ENCODE measurements at regions of chr7 and their contacts with region 1.

Region 1: DNA sequence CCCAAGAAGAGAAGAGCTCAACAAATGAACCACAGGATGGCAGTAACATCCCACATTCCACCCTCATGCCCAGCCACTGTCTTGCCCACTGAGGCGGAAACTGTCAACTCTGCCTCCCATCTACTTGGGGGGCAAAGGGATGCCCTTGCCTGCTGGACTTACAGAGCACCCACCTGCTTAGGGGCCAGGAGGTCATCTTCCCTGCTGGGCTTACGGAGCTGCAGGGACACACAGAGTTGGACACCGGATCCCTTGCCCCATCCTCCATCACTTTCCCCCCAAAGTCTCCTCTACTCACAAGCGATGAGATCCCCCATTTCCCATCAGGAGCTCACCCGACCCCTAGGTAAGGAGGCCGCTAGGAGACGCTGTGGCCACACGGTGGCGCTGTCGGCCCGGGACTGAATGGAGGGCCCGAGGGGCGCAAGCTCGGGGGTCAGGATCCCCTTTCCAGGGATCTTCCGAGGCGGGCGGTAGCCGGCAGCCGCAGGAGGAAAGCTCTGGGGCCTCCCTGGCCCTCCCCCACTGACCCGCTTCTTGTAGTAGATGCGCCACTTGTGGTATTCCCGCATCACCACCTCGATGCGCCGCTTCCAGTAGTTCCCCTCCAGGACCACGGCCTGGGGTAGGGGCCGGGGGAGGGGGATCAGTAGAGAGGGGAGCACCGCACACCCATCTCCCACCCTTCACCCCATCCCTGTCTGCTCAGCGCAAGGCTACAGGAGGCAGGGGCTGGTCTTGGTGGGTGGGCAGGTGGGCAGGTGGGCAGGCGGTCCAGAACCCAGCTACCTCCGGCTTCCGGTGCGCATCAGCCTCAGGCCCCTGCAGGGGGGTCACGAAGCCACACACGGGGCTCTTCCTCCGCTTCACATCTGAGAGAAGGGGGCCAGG is 17.3 kb downstream of the MLXIPL start:
- DNase-seq: no peak
- H3K4me3 ChIP-seq: no peak overlapping the region
- H3K27ac ChIP-seq: no peak overlapping the region
- H3K4me1 ChIP-seq: peaks cover 9% of the 10 kb centered on the region
- H3K27me3 ChIP-seq: no peaks in the 10 kb centered on the region
- CTCF ChIP-seq: peak; percentile 85 to 98

Region 2: DNA sequence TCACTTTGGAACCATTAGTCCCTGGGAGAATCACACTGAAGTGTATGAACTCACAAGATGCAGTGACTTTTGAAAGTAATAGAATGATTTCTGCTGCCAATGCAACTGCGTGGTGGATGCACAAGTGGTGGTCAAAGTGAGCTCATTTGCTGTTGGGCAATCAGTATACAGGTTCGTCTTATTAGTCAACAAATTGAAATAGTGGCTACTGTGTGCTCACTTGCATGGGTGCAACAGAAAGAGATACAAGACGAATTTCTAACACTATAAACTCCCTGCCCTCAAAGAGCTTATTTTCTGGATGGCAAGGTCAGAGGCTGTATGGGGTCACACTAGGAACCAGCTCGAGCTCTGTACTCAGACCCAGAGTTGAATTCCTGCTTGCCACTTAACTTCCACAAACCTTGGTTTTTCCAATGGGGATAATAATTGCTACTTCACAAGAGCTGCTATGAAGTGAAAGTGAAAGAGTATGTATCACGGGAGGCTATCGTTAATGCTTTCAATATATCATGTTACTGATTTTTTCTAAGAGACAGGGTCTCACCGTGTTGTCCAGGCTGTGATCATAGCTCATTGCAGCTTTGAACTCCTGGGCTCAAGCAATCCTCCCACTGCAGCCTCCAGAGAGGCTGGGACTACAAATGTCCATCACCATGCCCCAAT is 41.2 kb before region 1 on chr7:
- CTCF ChIA-PET with region 1: no interaction called
- dilution Hi-C with region 1: loop called (anchors 5 kb)
- in situ Hi-C with region 1: no loop called
- intact Hi-C with region 1: no loop called
- DNase-seq: no peak
- H3K4me3 ChIP-seq: no peak overlapping the region
- H3K27ac ChIP-seq: no peak overlapping the region
- H3K4me1 ChIP-seq: no peaks in the 10 kb centered on the region
- H3K27me3 ChIP-seq: no peaks in the 10 kb centered on the region
- CTCF ChIP-seq: no peak

Region 3: DNA sequence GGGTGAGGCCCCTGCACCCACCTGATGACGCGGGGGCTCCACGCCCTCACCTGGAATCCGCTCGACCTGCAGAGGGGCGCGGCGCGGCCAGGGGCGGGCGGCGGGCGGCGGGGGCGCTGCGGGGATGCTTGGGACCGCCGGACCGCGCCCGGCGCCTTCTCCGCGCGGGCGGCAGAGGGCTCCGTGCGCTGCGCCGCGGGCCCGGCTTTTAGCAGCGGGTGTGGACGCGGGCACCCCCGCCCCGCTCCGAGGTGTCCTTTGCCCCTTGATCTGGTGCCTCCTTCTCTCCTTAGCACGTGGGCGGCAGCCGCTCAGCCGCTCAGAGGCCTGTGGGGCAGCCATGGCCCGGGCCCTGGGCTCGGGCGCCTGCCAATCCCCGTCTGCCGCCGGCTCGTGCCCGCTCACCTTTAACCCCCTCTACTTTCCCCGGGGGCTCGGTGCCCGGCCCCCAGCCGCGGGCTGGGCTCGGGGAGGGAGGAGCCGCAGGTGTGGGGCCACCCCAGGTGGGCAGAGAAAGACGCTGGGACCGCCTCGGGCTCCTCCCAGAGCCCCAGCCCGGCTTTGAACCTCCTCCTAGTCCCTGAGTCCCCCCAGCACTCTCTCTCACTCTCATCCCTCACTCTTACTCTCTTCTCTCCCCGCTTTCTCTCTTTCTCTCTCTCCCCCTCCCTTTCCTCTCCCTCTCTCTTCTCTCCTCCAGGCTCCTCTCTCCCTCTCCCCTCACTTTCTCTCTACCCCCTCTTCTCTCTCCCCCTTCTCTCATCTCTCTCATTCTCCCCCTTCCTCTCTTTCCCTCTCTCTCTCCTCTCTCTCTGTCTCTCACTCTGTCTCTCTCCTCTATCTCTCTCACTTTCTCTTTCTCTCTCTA is 40.9 kb after region 1 on chr7:
- CTCF ChIA-PET with region 1: interaction called, 22 read pairs
- dilution Hi-C with region 1: loop called (anchors 5 kb)
- in situ Hi-C with region 1: no loop called
- intact Hi-C with region 1: no loop called
- DNase-seq: no peak
- H3K4me3 ChIP-seq: peak overlapping the region; percentile 32 to 37 (median 35)
- H3K27ac ChIP-seq: no peak overlapping the region
- H3K4me1 ChIP-seq: peaks cover 8% of the 10 kb centered on the region
- H3K27me3 ChIP-seq: no peaks in the 10 kb centered on the region
- CTCF ChIP-seq: peak in 1 of 2 donors; percentile 13

Region 4: DNA sequence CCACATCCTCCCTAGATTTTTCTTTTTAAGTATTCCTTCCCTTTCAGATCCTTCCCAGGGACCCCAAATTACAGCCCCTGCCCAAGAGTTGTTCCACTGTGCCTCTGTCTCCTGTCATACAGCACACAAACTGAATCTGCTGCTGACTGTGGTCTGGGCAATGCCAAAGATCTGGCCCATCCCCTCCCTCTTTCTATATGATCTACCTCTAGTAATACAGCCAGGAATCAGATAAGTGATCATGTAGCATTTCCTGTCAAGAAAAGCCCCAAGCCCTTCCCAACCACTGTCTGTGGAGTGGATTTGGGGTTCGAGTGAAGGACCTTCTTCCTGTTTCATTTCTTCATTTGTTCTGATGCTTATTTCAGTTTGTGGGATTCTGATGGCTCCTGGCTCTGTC is 105.7 kb after region 1 on chr7:
- CTCF ChIA-PET with region 1: interaction called, 3 read pairs
- dilution Hi-C with region 1: loop called (anchors 5 kb)
- in situ Hi-C with region 1: loop called in 1 of 2 experiments (anchors 10 kb)
- intact Hi-C with region 1: no loop called
- DNase-seq: no peak
- H3K4me3 ChIP-seq: no peak overlapping the region
- H3K27ac ChIP-seq: no peak overlapping the region
- H3K4me1 ChIP-seq: peaks cover 26% of the 10 kb centered on the region
- H3K27me3 ChIP-seq: no peaks in the 10 kb centered on the region
- CTCF ChIP-seq: no peak

Region 5: DNA sequence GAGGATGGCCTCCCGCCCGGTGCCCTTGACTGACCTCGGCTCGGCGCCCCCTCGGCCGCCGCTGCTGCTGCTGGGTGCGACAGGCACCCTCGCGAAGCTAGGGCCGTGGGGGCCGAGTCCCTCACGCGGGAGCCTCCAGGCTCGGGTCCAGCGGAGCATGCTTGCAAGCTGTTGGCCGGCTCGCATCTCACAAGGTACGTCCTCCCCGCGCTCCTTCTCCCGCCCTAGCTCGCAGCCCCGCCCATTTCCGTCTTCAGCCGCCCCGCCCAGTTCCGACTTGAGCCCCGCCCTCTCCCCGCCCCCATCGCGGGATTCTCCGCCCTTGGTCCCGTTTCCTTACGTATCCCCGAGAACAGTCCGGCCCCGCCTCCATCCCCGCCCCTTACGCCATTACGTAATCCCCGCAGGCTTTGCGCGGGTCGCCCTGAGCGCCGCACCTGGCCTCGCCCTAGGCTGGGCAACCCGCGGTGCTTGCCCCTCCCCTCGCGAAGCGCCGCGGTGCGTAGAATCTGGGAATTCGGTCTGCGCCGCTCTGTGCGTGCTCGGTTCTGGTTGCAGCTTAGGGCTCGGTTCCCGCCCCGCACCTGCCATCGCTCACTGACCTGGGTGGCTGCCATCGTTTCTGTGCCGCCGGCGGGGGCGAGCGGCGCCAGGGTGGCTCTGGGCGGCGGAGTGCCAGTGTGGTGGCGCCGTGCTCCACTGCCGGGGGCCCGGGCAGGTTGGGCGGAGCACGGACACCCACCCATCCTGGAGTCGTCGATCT is 131.7 kb after region 1 on chr7 and contains the start of gene ABHD11:
- CTCF ChIA-PET with region 1: no interaction called
- dilution Hi-C with region 1: no loop called
- in situ Hi-C with region 1: loop called (anchors 5 kb)
- intact Hi-C with region 1: loop called (anchors 2 kb)
- DNase-seq: peak; percentile 96
- H3K4me3 ChIP-seq: peak within 1 kb of the TSS; percentile 59 to 84 (median 73)
- H3K27ac ChIP-seq: peak within 1 kb of the TSS; percentile 82
- H3K4me1 ChIP-seq: peaks cover 9% of the 10 kb centered on the region
- H3K27me3 ChIP-seq: no peaks in the 10 kb centered on the region
- CTCF ChIP-seq: no peak
- total RNA-seq, gene ABHD11: 6.7 to 23.6 TPM

Region 6: GRCh38 chr7:74129887-74130286 is 522.8 kb after region 1 on chr7:
- CTCF ChIA-PET with region 1: no interaction called
- dilution Hi-C with region 1: no loop called
- in situ Hi-C with region 1: no loop called
- intact Hi-C with region 1: no loop called
- DNase-seq: no peak
- H3K4me3 ChIP-seq: no peak overlapping the region
- H3K27ac ChIP-seq: no peak overlapping the region
- H3K4me1 ChIP-seq: peaks cover 13% of the 10 kb centered on the region
- H3K27me3 ChIP-seq: no peaks in the 10 kb centered on the region
- CTCF ChIP-seq: no peak

Region 7: GRCh38 chr7:74405191-74405898 is 798.3 kb after region 1 on chr7:
- CTCF ChIA-PET with region 1: no interaction called
- dilution Hi-C with region 1: no loop called
- in situ Hi-C with region 1: no loop called
- intact Hi-C with region 1: no loop called
- DNase-seq: no peak
- H3K4me3 ChIP-seq: no peak overlapping the region
- H3K27ac ChIP-seq: no peak overlapping the region
- H3K4me1 ChIP-seq: no peaks in the 10 kb centered on the region
- H3K27me3 ChIP-seq: no peaks in the 10 kb centered on the region
- CTCF ChIP-seq: peak; percentile 33 to 39